ENCODE measurements at regions of chr20 and their contacts with region 1.

Region 1: DNA sequence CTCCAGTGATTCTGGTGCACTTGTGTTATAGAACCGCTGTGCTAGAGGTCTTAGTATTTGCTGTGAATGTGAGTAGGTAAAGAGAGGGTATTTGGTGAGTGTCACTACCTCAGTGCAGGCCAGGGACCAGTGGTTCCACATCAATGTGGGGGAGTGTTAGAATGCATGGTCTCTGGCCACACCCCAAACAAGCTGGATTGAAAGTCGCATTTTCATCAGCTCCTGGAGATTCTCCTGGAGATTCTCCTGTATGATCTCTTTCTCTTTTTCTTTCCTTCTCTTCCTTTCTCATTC is 26.8 kb upstream of the BCAS1 start:
- DNase-seq: no peak
- H3K4me3 ChIP-seq: no peak overlapping the region
- H3K27ac ChIP-seq: no peak overlapping the region
- H3K4me1 ChIP-seq: no peaks in the 10 kb centered on the region
- H3K27me3 ChIP-seq: peaks cover 0 to 4% (median 0%) of the 10 kb centered on the region in 3 donors
- CTCF ChIP-seq: no peak
- EP300 ChIP-seq: no peak
- POLR2A ChIP-seq: no peak

Region 2: DNA sequence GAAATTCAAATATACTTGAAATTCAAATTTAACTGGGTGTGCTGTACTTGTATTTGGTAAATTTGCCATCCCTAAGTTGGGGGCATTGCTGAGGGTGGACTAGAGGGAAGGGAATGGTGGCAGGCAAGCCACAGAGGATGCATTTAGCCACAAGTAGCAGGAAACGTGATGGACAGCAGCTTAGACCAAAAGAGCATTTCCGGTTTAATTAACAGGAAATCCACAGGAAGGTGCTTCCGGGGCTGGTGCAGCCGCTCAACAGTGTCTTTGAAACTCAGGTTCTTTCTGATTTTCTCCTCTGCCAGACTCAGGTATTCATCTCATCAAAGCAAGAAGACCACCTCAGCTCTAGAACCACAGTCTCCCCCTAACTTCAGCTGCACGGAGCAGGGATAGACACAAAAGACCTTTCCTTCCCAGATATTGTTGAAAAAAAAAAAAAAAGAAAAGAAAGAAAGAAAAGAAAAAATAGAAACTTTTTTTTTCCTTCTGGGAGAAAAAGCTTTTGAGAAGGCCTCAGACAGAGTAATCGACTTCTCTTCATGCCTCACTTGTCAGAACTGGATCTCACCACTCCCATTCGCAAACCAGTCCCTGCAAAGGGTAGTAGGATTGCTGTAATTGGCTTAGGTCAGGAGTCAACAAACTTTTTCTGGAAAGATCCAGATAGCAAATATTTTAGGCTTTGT is 18.7 kb before region 1 on chr20:
- intact Hi-C with region 1: no loop called
- DNase-seq: no peak
- H3K4me3 ChIP-seq: no peak overlapping the region
- H3K27ac ChIP-seq: no peak overlapping the region
- H3K4me1 ChIP-seq: no peaks in the 10 kb centered on the region
- H3K27me3 ChIP-seq: no peaks in the 10 kb centered on the region
- CTCF ChIP-seq: no peak
- EP300 ChIP-seq: no peak
- POLR2A ChIP-seq: no peak

Region 3: GRCh38 chr20:54199721-54200176 is 102.6 kb after region 1 on chr20:
- intact Hi-C with region 1: loop called (anchors 2 kb)
- DNase-seq: peak; percentile 78
- H3K4me3 ChIP-seq: no peak overlapping the region
- H3K27ac ChIP-seq: no peak overlapping the region
- H3K4me1 ChIP-seq: no peaks in the 10 kb centered on the region
- H3K27me3 ChIP-seq: no peaks in the 10 kb centered on the region
- CTCF ChIP-seq: peak; percentile 54 to 84 (median 71)
- EP300 ChIP-seq: no peak
- POLR2A ChIP-seq: no peak

Region 4: DNA sequence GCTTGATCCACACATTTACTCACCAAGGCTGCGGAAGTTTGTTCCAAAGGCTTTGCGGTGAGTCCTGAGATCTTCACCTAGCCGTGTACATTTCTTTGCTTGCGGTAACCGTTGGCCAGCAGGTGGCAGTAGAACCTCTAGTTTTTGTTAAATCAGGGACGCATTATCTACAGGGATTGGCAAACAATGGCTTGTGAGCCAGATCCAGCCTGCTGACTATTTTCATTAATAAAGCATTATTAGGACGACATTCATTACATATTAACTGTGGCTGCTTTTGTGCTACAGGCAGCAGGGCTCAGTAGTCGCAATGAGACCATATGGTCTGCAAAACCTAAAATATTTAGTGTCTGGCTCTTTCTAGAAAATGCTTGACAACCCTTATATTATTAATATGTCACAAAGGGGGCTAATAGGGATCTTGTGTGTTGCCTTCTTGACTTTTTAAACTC is 552.4 kb after region 1 on chr20:
- intact Hi-C with region 1: loop called (anchors 2 kb)
- DNase-seq: peak; percentile 81
- H3K4me3 ChIP-seq: no peak overlapping the region
- H3K27ac ChIP-seq: no peak overlapping the region
- H3K4me1 ChIP-seq: no peaks in the 10 kb centered on the region
- H3K27me3 ChIP-seq: no peaks in the 10 kb centered on the region
- CTCF ChIP-seq: peak; percentile 35 to 83 (median 49)
- EP300 ChIP-seq: no peak
- POLR2A ChIP-seq: no peak